Psoas muscle (tissue), 8 donors: ENCODE measurements at regions of chr14 and their contacts with region 1.

Region 1: GRCh38 chr14:50926851-50927386 is 17.4 kb downstream of the PYGL start:
- DNase-seq: no peak
- ATAC-seq: no peak
- H3K4me3 ChIP-seq: no peak overlapping the region
- H3K27ac ChIP-seq: peak overlapping the region; percentile 32
- H3K4me1 ChIP-seq: peaks cover 4% of the 10 kb centered on the region
- H3K27me3 ChIP-seq: no peaks in the 10 kb centered on the region
- CTCF ChIP-seq: no peak

Region 2: DNA sequence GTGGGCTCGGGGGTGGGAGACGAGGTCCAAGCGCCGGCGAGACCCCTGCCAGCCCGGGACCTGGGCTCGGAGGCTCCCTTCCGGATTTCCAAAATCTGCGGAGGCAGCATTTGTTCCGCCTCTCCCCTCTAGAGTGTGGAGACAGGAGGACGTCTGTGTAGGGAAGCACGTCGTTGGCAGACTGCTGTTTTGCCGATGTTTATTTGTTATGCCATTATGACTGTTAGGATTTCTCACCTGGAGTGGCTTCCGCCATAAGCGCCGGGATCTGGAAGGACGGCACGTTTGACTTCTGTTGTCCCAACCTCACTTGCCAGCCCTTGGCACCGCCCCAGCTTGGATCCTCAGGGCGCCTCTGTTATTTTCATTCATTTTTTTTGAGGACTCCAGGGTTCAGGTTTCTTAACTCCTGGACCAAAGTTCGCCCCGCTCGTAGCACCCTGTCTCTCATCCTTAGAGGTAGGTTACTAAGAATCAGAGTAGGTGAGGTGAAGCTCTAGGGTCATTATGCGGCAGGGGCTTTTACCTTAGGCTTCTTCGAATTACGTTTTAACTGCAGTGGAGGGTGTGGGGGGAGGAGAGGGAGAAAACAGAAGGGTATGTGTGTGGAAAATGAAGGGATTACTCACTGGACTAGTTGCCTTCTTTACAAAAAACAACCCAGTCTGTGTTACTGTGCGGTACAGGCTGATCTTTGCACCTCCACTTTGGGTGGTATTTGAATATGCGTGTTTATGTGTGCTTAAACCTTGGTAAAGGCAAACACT is 17.9 kb after region 1 on chr14:
- intact Hi-C with region 1: loop called in 1 of 2 experiments (anchors 1 kb)
- DNase-seq: peak; percentile 58 to 68
- ATAC-seq: peak; percentile 55 to 66 (median 65)
- H3K4me3 ChIP-seq: peak overlapping the region; percentile 92
- H3K27ac ChIP-seq: peak overlapping the region; percentile 71
- H3K4me1 ChIP-seq: no peaks in the 10 kb centered on the region
- H3K27me3 ChIP-seq: peaks cover 0 to 2% (median 0%) of the 10 kb centered on the region in 3 donors
- CTCF ChIP-seq: no peak

Region 3: DNA sequence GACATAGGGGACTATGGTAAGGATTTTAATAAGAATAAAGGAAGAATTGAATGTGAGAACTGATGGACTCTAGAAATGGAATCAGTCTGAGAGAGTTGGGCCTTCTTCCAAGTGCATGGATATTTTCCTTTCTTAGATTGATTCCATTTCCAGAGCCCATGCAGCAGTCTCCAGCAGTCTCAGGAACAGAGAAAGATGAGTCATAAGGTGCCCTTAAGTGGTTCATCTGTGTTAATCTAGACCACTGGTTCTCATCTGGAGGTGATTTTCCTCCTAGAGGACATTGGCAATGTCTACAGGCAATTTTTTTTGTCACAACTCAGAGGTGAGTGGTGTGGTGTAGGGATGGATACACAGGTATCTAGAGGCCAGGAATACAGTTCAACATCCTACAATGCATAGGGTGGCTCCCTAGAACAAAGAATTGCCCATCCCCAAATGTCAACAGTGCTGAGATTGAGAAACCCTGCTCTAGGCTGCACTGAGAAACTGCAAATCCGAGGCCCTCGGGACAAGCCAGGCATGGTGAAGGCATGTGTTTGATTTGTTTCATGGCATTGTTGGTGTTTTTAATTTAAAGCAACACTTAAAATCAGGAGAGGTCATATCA is 142.2 kb after region 1 on chr14:
- intact Hi-C with region 1: no loop called
- DNase-seq: no peak
- ATAC-seq: no peak
- H3K4me3 ChIP-seq: no peak overlapping the region
- H3K27ac ChIP-seq: no peak overlapping the region
- H3K4me1 ChIP-seq: no peaks in the 10 kb centered on the region
- H3K27me3 ChIP-seq: no peaks in the 10 kb centered on the region
- CTCF ChIP-seq: no peak